SK-N-SH (cell line): ENCODE measurements at regions of chr2 and their contacts with region 1.

Region 1: GRCh38 chr2:9799665-9800632 is 43.3 kb upstream of the TAF1B start:
- DNase-seq: peak; percentile 98
- H3K4me3 ChIP-seq: no peak overlapping the region; a peak in 1 of 4 replicates
- H3K27ac ChIP-seq: no peak overlapping the region
- H3K4me1 ChIP-seq: peaks cover 8 to 15% of the 10 kb centered on the region in 2 experiments; a peak in 3 of 4 replicates
- H3K27me3 ChIP-seq: no peaks in the 10 kb centered on the region
- CTCF ChIP-seq: peak; percentile 99
- EP300 ChIP-seq: no peak
- RAD21 ChIP-seq: peak; percentile 96

Region 2: DNA sequence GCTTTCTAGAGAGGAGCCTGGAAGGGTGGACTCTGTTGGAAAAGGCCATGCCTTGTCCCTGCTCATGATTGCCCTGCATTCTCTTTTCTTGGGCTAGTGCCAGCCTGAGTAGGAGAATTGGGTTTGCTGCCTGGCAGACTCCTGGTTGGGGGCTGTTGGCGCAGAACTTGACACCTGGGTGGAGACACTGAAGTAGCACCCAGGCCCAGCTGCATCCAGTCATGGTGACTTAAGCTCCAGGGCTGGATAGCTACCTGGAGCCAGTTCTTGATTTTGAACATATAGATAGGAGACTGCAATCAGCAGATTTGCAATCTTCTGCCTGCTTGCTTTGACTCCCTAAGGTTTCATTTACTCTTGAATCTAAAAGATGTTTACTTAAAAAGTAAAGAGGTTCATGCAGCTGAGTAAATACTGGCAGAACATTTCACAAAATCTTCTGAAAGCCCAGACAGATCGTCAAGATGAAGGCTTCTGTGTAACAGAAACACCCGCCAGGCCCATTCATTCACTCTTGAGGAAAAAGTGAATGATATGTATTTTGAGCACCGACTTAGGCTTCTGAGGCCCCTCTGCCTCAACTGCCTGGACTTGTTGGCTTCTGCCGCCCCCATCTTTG is 131.1 kb before region 1 on chr2:
- CTCF ChIA-PET with region 1: no interaction called
- POLR2A ChIA-PET with region 1: no interaction called
- DNase-seq: no peak
- H3K4me3 ChIP-seq: no peak overlapping the region
- H3K27ac ChIP-seq: no peak overlapping the region
- H3K4me1 ChIP-seq: peaks cover 5 to 23% of the 10 kb centered on the region in 2 experiments; a peak in 3 of 4 replicates
- H3K27me3 ChIP-seq: no peaks in the 10 kb centered on the region
- CTCF ChIP-seq: no peak
- EP300 ChIP-seq: no peak
- RAD21 ChIP-seq: no peak

Region 3: GRCh38 chr2:9824956-9825720 is 25.2 kb after region 1 on chr2:
- CTCF ChIA-PET with region 1: interaction called, 13 read pairs
- POLR2A ChIA-PET with region 1: no interaction called
- DNase-seq: no peak
- H3K4me3 ChIP-seq: no peak overlapping the region
- H3K27ac ChIP-seq: no peak overlapping the region
- H3K4me1 ChIP-seq: peaks cover 0 to 2% of the 10 kb centered on the region in 2 experiments; a peak in 1 of 4 replicates
- H3K27me3 ChIP-seq: no peaks in the 10 kb centered on the region
- CTCF ChIP-seq: no peak
- EP300 ChIP-seq: no peak
- RAD21 ChIP-seq: no peak

Region 4: GRCh38 chr2:9836524-9836923 is 36.6 kb after region 1 on chr2:
- CTCF ChIA-PET with region 1: interaction called, 21 read pairs
- POLR2A ChIA-PET with region 1: no interaction called
- DNase-seq: no peak
- H3K4me3 ChIP-seq: no peak overlapping the region
- H3K27ac ChIP-seq: no peak overlapping the region
- H3K4me1 ChIP-seq: no peaks in the 10 kb centered on the region
- H3K27me3 ChIP-seq: no peaks in the 10 kb centered on the region; the same call in 1 of the 2 replicates
- CTCF ChIP-seq: no peak
- EP300 ChIP-seq: no peak
- RAD21 ChIP-seq: no peak

Region 5: DNA sequence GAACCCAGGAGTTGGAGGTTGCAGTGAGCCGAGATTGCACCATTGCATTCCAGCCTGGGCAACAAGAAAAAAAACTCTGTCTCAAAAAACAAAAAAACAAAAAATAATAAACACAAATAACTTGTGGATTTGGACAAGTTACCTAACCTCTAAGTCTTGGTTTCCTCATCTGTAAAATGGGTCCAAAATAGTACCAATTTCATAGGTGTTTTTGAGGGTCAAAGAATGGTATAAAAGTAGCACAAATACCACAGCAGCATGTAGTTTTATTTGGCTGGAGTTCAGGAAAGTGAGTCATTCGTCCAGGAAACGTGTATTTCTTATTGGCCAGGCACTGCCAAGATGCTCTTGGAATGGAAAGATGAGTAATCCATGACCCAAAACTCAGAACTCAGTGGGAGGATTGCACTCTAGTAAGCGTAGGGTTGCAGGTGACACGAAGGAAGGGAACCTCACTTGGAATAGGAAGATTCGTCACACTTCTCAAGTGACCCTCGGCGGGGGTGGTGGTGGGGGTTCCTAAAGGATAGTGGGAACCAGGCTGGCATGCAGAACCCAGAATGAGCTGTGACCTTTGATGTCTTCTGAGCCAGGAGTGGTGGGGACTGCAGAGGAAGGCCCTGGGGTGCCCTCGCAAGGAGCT is 176.0 kb after region 1 on chr2:
- CTCF ChIA-PET with region 1: interaction called, 10 read pairs
- POLR2A ChIA-PET with region 1: no interaction called
- DNase-seq: no peak
- H3K4me3 ChIP-seq: no peak overlapping the region
- H3K27ac ChIP-seq: peak overlapping the region in 1 of 2 experiments; percentile 57; a peak in 2 of 4 replicates
- H3K4me1 ChIP-seq: peaks cover 4 to 34% of the 10 kb centered on the region in 2 experiments; a peak in 3 of 4 replicates
- H3K27me3 ChIP-seq: no peaks in the 10 kb centered on the region
- CTCF ChIP-seq: no peak
- EP300 ChIP-seq: peak in 1 of 2 experiments; percentile 86; a peak in 1 of 4 replicates
- RAD21 ChIP-seq: no peak

Region 6: GRCh38 chr2:10057231-10058107 is 257.5 kb after region 1 on chr2:
- CTCF ChIA-PET with region 1: interaction called, 185 read pairs
- POLR2A ChIA-PET with region 1: no interaction called
- DNase-seq: peak; percentile 58
- H3K4me3 ChIP-seq: no peak overlapping the region
- H3K27ac ChIP-seq: no peak overlapping the region
- H3K4me1 ChIP-seq: peaks cover 0 to 23% of the 10 kb centered on the region in 2 experiments; a peak in 1 of 4 replicates
- H3K27me3 ChIP-seq: no peaks in the 10 kb centered on the region
- CTCF ChIP-seq: no peak
- EP300 ChIP-seq: no peak
- RAD21 ChIP-seq: no peak